HEK293 (cell line): ENCODE measurements at regions of chr4 and their contacts with region 1.

Region 1: DNA sequence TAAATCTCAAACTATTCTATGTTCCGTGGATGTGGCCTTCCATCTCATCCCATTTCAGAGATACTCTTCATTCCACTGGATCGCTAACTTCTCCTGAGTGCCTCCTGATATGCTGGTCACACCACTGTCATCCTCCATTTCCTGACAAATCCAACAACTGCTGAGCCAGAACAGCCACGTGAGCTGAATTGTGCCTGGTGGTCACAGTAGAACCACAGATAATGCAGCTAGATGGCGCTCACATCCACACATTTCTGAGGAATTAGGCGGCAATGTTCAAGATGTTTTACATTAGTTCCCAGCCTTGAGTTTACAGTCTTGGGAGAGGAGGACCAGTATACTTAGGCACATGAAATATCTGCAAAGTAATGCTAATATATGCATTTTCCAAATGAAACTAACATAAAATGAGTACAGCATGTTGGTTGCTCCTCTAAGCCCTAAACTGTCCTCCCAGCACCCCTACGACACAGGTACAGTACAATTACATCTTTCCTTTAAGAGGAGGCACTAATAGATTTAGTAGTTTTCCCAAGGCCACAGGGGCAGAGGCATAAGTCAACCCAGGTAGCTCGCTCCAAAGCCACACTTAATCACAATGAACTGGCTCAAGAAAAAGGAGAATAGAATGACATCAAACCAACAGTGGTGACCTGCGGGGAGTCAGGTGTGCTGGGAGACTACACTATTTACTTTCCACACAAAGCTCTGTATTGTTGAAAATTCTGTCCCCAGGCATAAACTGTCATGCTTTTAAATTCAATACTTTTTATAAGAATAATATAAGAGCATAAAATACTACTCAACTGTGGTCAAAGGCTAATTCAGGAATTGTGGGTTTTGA is 134.2 kb downstream of the CHIC2 start:
- H3K4me3 ChIP-seq: no peak overlapping the region
- H3K27ac ChIP-seq: no peak overlapping the region
- H3K4me1 ChIP-seq: no peaks in the 10 kb centered on the region; the same call in 1 of the 2 replicates
- CTCF ChIP-seq: peak; percentile 58

Region 2: GRCh38 chr4:53734584-53735353 is 195.4 kb before region 1 on chr4:
- CTCF ChIA-PET with region 1: no interaction called
- POLR2A ChIA-PET with region 1: no interaction called
- H3K4me3 ChIP-seq: no peak overlapping the region
- H3K27ac ChIP-seq: no peak overlapping the region
- H3K4me1 ChIP-seq: no peaks in the 10 kb centered on the region
- CTCF ChIP-seq: no peak

Region 3: GRCh38 chr4:53943345-53944085 is 13.3 kb after region 1 on chr4:
- CTCF ChIA-PET with region 1: interaction called, 21 read pairs
- POLR2A ChIA-PET with region 1: no interaction called
- H3K4me3 ChIP-seq: no peak overlapping the region
- H3K27ac ChIP-seq: no peak overlapping the region
- H3K4me1 ChIP-seq: peaks cover 6% of the 10 kb centered on the region
- CTCF ChIP-seq: no peak

Region 4: DNA sequence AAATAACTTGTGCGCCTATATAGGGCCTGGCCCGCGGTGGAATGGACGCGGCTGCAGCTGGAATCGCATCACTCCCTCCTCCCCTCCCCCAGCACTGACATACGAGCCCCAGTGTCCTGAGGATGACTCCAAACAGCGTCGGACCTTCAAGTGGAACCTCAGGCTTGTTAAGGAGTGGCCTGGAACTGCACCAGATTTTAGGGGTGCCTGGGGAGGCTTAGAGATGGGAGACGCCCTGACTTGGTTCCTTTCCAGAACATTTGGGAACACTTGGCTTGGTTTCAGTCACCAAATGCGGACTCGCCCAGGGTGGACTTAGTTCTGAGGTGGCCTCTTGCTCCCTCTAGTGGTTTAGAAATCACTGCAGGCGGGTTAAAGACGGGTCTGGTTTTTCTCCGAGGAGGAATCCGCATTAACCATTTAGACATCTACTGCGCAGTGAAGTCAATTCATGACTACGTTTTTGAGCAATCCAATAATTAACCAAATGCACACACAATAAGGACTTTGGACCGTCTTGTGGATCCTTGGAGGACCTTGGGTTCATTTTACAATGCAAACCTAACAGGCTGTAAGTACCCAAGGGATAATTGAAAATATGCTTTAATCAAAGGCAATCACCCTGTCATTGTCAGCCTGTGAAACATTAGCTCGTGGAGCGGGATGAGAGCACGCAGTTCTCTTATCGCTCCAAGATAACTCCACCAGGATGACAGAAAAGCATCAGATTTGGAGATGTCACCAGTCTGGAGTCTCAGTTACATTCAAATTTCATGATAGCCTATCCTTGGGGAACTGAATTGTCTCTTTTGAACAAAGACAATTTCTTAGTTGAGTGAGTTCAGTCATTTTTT is 287.7 kb after region 1 on chr4:
- CTCF ChIA-PET with region 1: interaction called, 62 read pairs
- POLR2A ChIA-PET with region 1: no interaction called
- H3K4me3 ChIP-seq: peak overlapping the region; percentile 45
- H3K27ac ChIP-seq: peak overlapping the region; percentile 46; the same call in 1 of the 2 replicates
- H3K4me1 ChIP-seq: no peaks in the 10 kb centered on the region
- CTCF ChIP-seq: peak; percentile 61